Activated CD4-positive, alpha-beta memory T cell treated with anti-CD3 and anti-CD28 coated beads for 36 hours (primary cell): ENCODE measurements at regions of chr5 and their contacts with region 1.

Region 1: GRCh38 chr5:39209924-39210323 is 9.4 kb downstream of the FYB1 start:
- DNase-seq: peak; percentile 90
- H3K4me3 Mint-ChIP-seq: peak overlapping the region; percentile 83
- H3K27ac Mint-ChIP-seq: peak overlapping the region; percentile 95
- H3K4me1 Mint-ChIP-seq: peaks cover 75% of the 10 kb centered on the region
- H3K27me3 Mint-ChIP-seq: no peaks in the 10 kb centered on the region

Region 2: GRCh38 chr5:39158127-39158593 is 51.8 kb before region 1 on chr5:
- CTCF ChIA-PET with region 1: interaction called, 7 read pairs
- POLR2A ChIA-PET with region 1: interaction called, 12 read pairs
- intact Hi-C with region 1: no loop called
- DNase-seq: peak; percentile 56
- H3K4me3 Mint-ChIP-seq: peak overlapping the region; percentile 71
- H3K27ac Mint-ChIP-seq: peak overlapping the region; percentile 90
- H3K4me1 Mint-ChIP-seq: peaks cover 69% of the 10 kb centered on the region
- H3K27me3 Mint-ChIP-seq: no peaks in the 10 kb centered on the region

Region 3: DNA sequence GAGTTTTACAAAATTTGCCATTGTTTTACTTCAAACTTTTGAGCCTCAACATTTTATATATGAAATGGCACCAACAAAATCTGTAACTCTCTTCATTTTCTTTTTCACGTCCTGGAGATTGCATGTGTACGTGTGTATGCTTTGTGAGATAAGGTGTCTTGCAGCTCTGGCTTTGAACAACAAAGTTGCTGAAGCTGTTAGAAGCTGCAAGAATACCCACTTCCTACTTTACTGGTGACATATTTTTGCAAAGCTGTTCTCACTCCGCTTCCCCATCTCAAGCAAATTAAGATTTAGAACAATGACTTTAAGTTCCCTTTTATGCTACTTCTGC is 32.3 kb before region 1 on chr5:
- CTCF ChIA-PET with region 1: interaction called, 5 read pairs
- POLR2A ChIA-PET with region 1: interaction called, 9 read pairs
- intact Hi-C with region 1: loop called (anchors 1 kb)
- DNase-seq: no peak
- H3K4me3 Mint-ChIP-seq: peak overlapping the region; percentile 63
- H3K27ac Mint-ChIP-seq: peak overlapping the region; percentile 88
- H3K4me1 Mint-ChIP-seq: peaks cover 97% of the 10 kb centered on the region
- H3K27me3 Mint-ChIP-seq: no peaks in the 10 kb centered on the region

Region 4: GRCh38 chr5:39194466-39195136 is 15.3 kb before region 1 on chr5:
- CTCF ChIA-PET with region 1: interaction called, 7 read pairs
- POLR2A ChIA-PET with region 1: interaction called, 79 read pairs
- intact Hi-C with region 1: loop called (anchors 2 kb)
- DNase-seq: no peak
- H3K4me3 Mint-ChIP-seq: peak overlapping the region; percentile 75
- H3K27ac Mint-ChIP-seq: peak overlapping the region; percentile 91
- H3K4me1 Mint-ChIP-seq: peaks cover 66% of the 10 kb centered on the region
- H3K27me3 Mint-ChIP-seq: no peaks in the 10 kb centered on the region

Region 5: GRCh38 chr5:39283231-39283818 is 73.4 kb after region 1 on chr5:
- CTCF ChIA-PET with region 1: interaction called, 19 read pairs
- POLR2A ChIA-PET with region 1: no interaction called
- intact Hi-C with region 1: no loop called
- DNase-seq: peak; percentile 60
- H3K4me3 Mint-ChIP-seq: peak overlapping the region; percentile 4
- H3K27ac Mint-ChIP-seq: peak overlapping the region; percentile 68
- H3K4me1 Mint-ChIP-seq: peaks cover 31% of the 10 kb centered on the region
- H3K27me3 Mint-ChIP-seq: peaks cover 3% of the 10 kb centered on the region

Region 6: DNA sequence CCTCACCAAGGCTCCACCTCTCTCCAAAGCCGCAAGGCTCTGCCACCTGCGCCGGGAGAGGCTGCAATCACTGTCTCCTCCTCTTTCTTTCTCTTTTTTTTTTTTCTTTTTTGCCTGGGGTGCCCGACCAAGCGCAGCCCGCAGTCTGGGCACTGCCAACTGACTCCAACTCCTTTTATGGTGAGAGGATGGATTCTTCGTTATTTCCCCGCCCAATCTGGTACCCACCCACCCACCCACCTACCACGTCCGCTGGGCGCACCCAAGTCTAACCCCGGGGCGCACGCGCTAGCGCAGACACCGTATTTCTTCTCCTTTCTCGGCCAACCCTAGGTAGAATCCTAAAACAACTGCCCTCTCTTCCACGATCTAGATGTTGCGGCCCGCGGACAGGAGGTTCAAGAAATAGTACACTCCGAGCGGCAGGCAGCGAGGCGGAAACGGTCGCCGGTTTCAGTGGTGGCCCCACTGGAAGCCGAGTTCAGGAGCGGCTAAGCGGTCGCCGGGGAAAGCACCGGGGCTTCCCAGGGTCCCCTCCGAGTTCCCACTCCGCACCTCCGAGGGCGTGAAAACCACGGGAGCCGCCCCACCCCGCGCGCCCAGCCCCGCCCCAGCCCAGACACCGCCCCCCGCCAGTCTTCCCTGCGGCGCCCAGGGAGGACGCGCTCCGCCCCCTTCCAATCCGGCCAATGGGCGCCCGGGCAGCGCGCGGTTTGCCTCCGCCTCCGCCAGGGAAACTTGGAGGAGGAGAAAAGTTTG is 1469.4 kb after region 1 on chr5:
- CTCF ChIA-PET with region 1: no interaction called
- POLR2A ChIA-PET with region 1: no interaction called
- intact Hi-C with region 1: loop called (anchors 2 kb)
- DNase-seq: peak; percentile 96
- H3K4me3 Mint-ChIP-seq: peak overlapping the region; percentile 93
- H3K27ac Mint-ChIP-seq: peak overlapping the region; percentile 97
- H3K4me1 Mint-ChIP-seq: peaks cover 37% of the 10 kb centered on the region
- H3K27me3 Mint-ChIP-seq: no peaks in the 10 kb centered on the region